GM12878 (cell line): ENCODE measurements at regions of chr2 and their contacts with region 1.

Region 1: DNA sequence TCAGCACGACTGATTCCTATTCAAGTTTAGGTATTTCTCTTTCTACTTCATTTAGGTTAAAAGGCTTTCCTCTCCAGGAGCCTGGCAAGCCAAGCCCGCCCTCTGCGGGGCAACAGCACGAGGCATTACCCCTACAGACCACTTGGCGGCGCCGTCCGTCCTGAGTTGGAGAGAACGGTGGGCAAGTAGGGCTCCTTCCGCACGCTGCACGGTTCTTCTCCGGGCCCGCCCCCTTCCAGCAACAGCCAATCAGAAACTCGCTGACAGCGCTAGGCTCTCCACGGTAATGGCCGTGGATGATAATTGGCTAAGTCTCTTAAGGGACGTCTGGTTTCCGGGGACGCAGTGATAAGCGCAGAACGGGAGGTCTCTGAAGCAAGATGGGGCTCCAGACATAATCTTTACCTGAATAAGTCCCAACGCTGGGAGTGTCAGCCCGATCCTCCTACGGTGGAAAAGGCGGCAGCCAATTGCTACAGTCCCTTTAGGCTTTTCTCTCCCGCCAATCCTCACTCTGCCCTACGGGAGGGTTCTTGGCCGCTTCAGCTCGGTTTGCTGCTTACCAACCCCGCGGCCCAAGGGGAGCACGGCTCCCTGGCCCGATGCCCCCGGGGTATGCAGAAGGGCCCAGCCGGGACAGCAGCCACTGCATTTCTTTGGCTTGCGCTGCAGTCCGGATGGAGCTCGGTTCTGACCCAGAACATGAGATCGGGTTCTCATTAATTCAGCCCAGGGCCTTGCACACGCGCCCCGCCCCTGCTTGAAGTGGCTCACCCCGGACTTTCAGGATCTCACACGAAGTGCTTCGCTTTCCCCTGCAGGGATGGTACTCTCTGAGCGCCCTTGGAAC is 206.9 kb upstream of the PKDCC start:
- DNase-seq: peak; percentile 88
- ATAC-seq: peak; percentile 100
- H3K4me3 ChIP-seq: peak overlapping the region; percentile 75
- H3K27ac ChIP-seq: peak overlapping the region; percentile 53; the same call in 1 of the 2 replicates
- H3K4me1 ChIP-seq: no peaks in the 10 kb centered on the region
- H3K27me3 ChIP-seq: peaks cover 1 to 2% of the 10 kb centered on the region in 2 experiments; a peak in 2 of 4 replicates
- CTCF ChIP-seq: peak; percentile 97 to 99 (median 99)
- EP300 ChIP-seq: no peak
- POLR2A ChIP-seq: peak; percentile 73
- RAD21 ChIP-seq: peak; percentile 83

Region 2: GRCh38 chr2:41736105-41736567 is 104.8 kb before region 1 on chr2:
- CTCF ChIA-PET with region 1: no interaction called
- POLR2A ChIA-PET with region 1: no interaction called
- RAD21 ChIA-PET with region 1: no interaction called
- SMC1A ChIA-PET with region 1: no interaction called
- in situ Hi-C with region 1: no loop called
- intact Hi-C with region 1: no loop called
- DNase-seq: peak; percentile 36
- ATAC-seq: peak; percentile 95
- H3K4me3 ChIP-seq: no peak overlapping the region
- H3K27ac ChIP-seq: no peak overlapping the region
- H3K4me1 ChIP-seq: peaks cover 7% of the 10 kb centered on the region
- H3K27me3 ChIP-seq: no peaks in the 10 kb centered on the region
- CTCF ChIP-seq: no peak
- EP300 ChIP-seq: no peak
- POLR2A ChIP-seq: no peak
- RAD21 ChIP-seq: no peak

Region 3: DNA sequence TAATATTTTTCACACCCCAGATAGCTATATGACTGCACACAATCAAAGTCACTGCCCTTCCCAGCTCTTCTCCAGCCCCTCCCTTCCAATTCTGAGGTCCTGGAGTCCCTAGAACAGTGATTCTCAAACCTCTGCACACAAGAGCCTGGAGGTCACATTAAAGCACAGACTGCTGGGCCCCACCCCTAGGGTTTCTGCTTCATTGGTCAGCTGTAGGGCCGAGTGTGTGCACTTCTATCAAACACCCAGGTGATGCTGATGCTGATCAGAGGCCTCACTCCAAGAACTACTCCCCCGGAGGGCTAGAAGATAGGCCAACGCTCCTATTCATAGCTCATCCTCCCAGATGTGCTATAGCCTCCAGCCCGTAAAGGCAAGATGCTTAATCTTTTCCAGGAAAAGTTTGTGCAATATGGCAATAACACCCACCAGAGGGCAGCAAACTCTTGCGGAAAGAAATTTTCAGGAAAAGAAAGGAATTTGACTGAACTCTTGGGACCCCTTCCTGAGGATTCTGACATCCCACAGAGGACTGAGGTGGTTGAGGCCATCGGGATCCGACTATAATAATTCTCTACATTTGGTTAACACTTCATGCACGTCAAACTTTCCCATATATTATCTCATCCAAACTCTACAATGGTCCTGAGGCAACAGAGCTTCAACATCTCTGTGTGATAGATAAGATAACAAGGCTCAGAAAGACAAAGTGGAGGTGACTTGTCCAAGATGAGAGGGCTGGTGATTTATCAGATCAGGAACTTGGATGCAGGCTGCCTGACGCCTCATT is 12.7 kb after region 1 on chr2:
- CTCF ChIA-PET with region 1: interaction called, 13 read pairs
- POLR2A ChIA-PET with region 1: no interaction called
- RAD21 ChIA-PET with region 1: interaction called, 9 read pairs
- SMC1A ChIA-PET with region 1: interaction called, 3 read pairs
- in situ Hi-C with region 1: no loop called
- intact Hi-C with region 1: no loop called
- DNase-seq: no peak
- ATAC-seq: peak; percentile 47
- H3K4me3 ChIP-seq: no peak overlapping the region
- H3K27ac ChIP-seq: no peak overlapping the region
- H3K4me1 ChIP-seq: no peaks in the 10 kb centered on the region
- H3K27me3 ChIP-seq: no peaks in the 10 kb centered on the region; a peak in 1 of 4 replicates
- CTCF ChIP-seq: peak; percentile 49 to 58 (median 57); a peak in 5 of 6 replicates
- EP300 ChIP-seq: no peak
- POLR2A ChIP-seq: no peak
- RAD21 ChIP-seq: peak; percentile 78

Region 4: DNA sequence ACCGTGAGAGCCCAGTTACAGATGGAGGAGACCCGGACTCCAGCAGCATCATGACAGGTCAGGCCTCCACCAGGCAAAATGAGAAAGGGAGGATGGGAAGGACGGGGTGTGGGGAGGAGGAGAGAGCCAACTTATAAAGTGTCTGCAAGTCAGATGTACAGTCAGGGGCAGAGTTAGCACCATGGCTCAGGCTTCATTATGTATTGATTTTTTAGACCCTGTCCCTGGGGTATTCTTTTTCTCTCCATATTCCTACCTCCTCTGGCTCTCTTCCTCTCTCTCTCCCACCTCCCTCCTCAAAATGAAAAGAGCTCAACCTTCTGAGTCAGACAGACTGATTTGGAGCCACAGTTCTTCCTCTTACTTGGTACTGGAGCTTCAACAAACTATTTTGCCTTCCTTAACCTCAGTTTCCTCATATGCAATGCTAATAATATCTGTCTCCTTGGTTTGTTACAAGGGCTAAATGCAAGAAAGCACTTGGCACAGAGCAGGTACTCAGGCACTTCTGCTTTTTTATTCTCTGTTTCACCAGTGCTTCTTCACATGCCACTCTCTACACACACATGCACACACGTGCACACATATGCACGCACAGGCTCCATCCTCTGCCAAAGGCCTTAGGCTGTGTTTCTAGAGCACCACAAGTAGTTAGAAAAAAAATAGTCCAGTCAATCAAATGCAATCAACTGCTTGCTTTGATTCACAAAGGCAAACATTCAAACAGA is 114.6 kb after region 1 on chr2:
- CTCF ChIA-PET with region 1: no interaction called
- POLR2A ChIA-PET with region 1: no interaction called
- RAD21 ChIA-PET with region 1: no interaction called
- SMC1A ChIA-PET with region 1: no interaction called
- in situ Hi-C with region 1: no loop called
- intact Hi-C with region 1: no loop called
- DNase-seq: peak; percentile 76
- ATAC-seq: peak; percentile 67
- H3K4me3 ChIP-seq: no peak overlapping the region
- H3K27ac ChIP-seq: peak overlapping the region; percentile 45; the same call in 1 of the 2 replicates
- H3K4me1 ChIP-seq: peaks cover 30% of the 10 kb centered on the region
- H3K27me3 ChIP-seq: no peaks in the 10 kb centered on the region
- CTCF ChIP-seq: no peak
- EP300 ChIP-seq: no peak
- POLR2A ChIP-seq: no peak
- RAD21 ChIP-seq: no peak

Region 5: DNA sequence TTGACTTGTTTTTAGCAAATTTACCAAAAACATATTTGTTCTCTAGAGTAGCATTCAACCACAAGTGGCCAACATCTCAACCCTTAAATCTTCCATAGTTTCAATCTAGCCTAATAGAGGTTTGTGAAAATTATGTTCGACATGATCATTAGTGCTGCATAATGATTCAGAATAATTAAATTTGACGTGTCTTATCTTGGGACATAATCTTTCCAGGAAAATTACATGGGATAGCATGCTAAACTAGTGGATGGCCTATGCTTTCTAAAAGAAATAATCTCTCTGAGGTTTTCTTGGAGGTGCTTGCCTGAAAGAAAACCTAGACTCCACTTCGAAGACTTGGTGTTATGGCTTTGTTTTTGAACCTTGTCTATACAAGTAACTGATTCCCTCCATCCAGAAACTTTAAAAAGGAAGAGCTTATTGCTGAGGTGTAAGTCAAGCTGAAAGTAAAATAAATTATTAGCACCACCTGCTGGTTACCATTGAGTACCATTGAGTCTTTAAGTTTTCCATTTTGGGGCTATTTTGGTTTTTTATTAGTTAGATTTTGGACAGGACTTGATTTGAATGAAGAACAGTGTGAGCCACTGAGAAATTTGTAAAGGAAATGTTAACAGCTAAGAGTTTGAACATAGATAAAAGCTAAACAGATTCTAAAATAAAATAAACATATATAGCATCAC is 487.4 kb after region 1 on chr2:
- CTCF ChIA-PET with region 1: no interaction called
- POLR2A ChIA-PET with region 1: no interaction called
- RAD21 ChIA-PET with region 1: no interaction called
- SMC1A ChIA-PET with region 1: no interaction called
- in situ Hi-C with region 1: no loop called
- intact Hi-C with region 1: loop called (anchors 10 kb)
- DNase-seq: no peak
- ATAC-seq: peak; percentile 73
- H3K4me3 ChIP-seq: no peak overlapping the region
- H3K27ac ChIP-seq: no peak overlapping the region
- H3K4me1 ChIP-seq: no peaks in the 10 kb centered on the region
- H3K27me3 ChIP-seq: no peaks in the 10 kb centered on the region
- CTCF ChIP-seq: peak; percentile 26 to 47 (median 29); a peak in 3 of 6 replicates
- EP300 ChIP-seq: no peak
- POLR2A ChIP-seq: no peak
- RAD21 ChIP-seq: peak; percentile 58